ENCODE measurements at regions of chr10 and their contacts with region 1.

Region 1: DNA sequence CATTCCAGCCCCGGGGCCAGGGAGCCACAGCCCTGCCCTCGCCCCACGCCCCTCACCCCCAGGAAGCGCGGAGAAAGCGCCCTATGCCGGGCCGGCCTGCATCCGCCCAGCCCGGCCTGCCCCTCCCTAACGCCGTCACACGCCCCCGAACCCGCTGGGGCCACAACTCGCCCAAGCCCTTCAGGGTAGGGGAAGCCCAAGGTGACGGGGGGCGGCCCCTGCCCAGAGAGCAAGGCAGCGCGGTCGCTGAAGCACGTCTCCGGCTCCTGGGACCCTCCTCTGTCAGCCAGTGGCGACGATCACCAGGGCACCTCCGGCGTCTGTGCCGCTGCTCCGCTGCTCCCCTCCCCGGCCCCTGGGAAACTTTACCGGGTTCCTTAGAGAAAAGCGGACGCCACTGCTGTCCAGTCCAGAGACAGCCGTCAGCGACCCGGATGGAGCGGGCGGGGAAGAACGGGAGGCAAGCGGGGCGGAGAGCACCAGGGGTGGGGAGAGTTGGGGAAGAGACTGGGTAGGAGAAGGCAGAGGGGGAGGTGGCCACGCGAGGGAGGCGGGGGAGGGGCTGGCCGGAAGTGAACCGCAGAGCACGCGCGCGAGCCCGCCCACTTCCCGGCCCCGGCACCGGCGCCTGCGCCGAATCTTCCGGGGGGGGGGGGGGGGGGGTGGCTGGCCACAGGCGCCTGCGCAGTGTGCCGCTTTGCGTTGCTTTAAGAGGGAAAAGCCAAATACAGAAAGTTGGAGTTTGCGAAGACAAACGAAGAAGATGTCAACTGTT is at the start of gene HERC4:
- DNase-seq: peak; percentile 94
- ATAC-seq: peak; percentile 92 to 96
- H3K4me3 ChIP-seq: peak within 1 kb of the TSS; percentile 87 to 100 (median 96)
- H3K27ac ChIP-seq: peak within 1 kb of the TSS; percentile 94 to 99 (median 99)
- H3K4me1 ChIP-seq: peaks cover 32 to 42% of the 10 kb centered on the region in 2 donors
- H3K27me3 ChIP-seq: no peaks in the 10 kb centered on the region
- CTCF ChIP-seq: peak in 1 of 5 experiments; percentile 4
- POLR2A ChIP-seq: peak; percentile 88 to 90
- total RNA-seq, gene HERC4: 12.8 to 25.2 (median 13.1) TPM

Region 2: DNA sequence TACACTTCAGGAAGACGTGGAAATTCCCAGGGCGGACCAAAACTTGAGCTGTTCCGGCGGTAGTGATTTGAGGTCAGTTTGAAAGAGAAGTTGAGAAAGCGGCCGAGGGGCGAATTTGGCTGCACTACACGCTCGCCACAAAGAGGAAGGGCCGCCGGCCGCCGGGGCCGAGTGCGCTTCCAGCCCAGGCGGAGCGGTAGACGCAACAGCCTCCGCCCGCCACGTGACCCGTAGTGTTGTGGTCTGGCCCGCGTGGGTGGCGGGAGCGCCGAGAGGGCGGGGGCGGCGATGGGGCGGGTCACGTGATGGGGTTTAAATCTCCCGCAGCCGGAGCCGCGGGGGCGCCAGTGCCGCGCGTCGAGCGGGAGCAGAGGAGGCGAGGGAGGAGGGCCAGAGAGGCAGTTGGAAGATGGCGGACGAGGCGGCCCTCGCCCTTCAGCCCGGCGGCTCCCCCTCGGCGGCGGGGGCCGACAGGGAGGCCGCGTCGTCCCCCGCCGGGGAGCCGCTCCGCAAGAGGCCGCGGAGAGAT is 190.6 kb before region 1 on chr10 and contains the start of gene SIRT1:
- in situ Hi-C with region 1: loop called in 2 of 4 experiments (anchors 10 to 25 kb)
- intact Hi-C with region 1: loop called (anchors 1 kb)
- DNase-seq: peak; percentile 97
- ATAC-seq: peak; percentile 86 to 88
- H3K4me3 ChIP-seq: peak within 1 kb of the TSS; percentile 74 to 98 (median 85)
- H3K27ac ChIP-seq: peak within 1 kb of the TSS; percentile 87 to 96 (median 94)
- H3K4me1 ChIP-seq: peaks cover 20 to 22% of the 10 kb centered on the region in 2 donors
- H3K27me3 ChIP-seq: no peaks in the 10 kb centered on the region
- CTCF ChIP-seq: peak in 1 of 5 experiments; percentile 27
- POLR2A ChIP-seq: peak; percentile 98
- total RNA-seq, gene SIRT1: 18.7 to 21.5 (median 19.9) TPM

Region 3: GRCh38 chr10:68043030-68043429 is 31.9 kb before region 1 on chr10:
- in situ Hi-C with region 1: no loop called
- intact Hi-C with region 1: no loop called
- DNase-seq: no peak
- ATAC-seq: no peak
- H3K4me3 ChIP-seq: no peak overlapping the region
- H3K27ac ChIP-seq: no peak overlapping the region
- H3K4me1 ChIP-seq: no peaks in the 10 kb centered on the region
- H3K27me3 ChIP-seq: no peaks in the 10 kb centered on the region
- CTCF ChIP-seq: no peak
- POLR2A ChIP-seq: no peak

Region 4: DNA sequence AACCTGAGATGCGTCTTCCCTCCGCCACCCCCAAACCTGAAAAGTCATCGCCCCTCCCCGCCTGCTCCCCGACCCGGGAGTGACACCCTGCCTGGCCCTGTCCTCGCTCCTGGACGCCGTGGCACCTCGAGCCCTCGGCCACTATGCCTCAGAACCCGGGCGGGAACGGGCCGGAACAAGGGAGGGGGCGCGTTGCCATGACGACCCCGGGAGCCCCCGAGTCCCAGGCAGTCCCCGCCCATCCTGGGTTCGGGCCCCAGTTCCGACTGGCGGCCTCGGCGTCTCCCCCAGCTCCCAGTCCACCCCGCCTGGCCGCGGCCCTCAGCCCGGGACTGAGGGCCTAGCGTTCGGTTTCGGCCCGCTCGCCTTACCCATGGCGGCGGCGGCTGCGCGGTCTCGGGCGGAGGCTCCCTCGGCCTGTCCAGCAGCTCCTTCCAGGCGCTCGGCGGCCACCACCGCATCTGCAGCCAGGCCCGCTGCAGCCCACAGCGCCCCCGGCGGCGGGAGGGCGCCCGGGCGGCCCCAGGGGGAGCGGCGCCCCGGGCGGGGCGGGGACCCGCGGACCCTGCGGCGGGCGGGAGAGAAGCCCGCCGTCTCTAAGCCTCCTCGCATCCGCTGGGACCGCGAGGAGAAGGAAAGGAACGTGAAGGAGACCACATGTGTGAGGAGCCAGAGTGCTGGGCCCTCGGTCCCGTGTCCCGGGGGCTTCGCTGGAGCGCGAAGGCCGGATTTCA is 332.0 kb after region 1 on chr10 and contains the start of gene RUFY2:
- in situ Hi-C with region 1: no loop called
- intact Hi-C with region 1: loop called (anchors 2 kb)
- DNase-seq: peak; percentile 32 to 58
- ATAC-seq: peak; percentile 92 to 96
- H3K4me3 ChIP-seq: peak within 1 kb of the TSS; percentile 83 to 100 (median 96)
- H3K27ac ChIP-seq: peak within 1 kb of the TSS; percentile 87 to 95 (median 92)
- H3K4me1 ChIP-seq: peaks cover 3 to 11% of the 10 kb centered on the region in 2 donors
- H3K27me3 ChIP-seq: no peaks in the 10 kb centered on the region
- CTCF ChIP-seq: peak; percentile 45 to 99 (median 95)
- POLR2A ChIP-seq: peak; percentile 60 to 69
- total RNA-seq, gene RUFY2: 8.9 to 15.7 (median 11.7) TPM

Region 5: DNA sequence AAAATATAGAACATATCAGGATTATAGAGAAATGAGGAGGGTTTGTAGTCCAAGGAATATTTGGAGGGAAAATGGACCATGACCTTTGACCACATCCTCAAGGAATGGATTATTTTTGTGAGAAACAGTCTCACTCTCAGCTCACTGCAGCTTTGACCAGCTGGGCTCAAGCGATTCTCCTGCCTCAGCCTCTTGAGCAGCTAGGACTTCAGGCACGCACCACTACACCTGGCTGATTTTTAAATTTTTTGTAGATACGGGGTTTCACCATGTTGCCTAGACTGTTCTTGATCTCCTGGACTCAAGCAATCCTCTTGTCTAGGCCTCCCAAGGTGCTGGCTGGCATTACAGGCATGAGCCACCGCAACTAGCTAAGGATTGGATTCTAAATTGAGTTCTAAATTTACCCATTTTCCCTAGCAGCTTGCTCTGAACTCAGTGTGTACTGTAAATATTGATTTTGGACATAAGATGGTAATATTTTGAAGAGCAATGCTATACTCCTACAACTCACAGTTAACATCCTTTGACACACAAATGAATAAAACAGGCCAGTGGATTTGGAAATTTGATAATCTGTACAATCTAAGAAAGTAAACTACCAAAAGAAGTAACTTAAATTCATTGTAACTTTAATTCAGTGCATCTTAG is 559.0 kb after region 1 on chr10:
- in situ Hi-C with region 1: no loop called
- intact Hi-C with region 1: no loop called
- DNase-seq: no peak
- ATAC-seq: no peak
- H3K4me3 ChIP-seq: no peak overlapping the region
- H3K27ac ChIP-seq: no peak overlapping the region
- H3K4me1 ChIP-seq: peaks cover 2% of the 10 kb centered on the region in 2 donors
- H3K27me3 ChIP-seq: no peaks in the 10 kb centered on the region
- CTCF ChIP-seq: no peak
- POLR2A ChIP-seq: no peak